Left cardiac atrium (tissue), 4 donors: ENCODE measurements at regions of chr17 and their contacts with region 1.

Region 1: DNA sequence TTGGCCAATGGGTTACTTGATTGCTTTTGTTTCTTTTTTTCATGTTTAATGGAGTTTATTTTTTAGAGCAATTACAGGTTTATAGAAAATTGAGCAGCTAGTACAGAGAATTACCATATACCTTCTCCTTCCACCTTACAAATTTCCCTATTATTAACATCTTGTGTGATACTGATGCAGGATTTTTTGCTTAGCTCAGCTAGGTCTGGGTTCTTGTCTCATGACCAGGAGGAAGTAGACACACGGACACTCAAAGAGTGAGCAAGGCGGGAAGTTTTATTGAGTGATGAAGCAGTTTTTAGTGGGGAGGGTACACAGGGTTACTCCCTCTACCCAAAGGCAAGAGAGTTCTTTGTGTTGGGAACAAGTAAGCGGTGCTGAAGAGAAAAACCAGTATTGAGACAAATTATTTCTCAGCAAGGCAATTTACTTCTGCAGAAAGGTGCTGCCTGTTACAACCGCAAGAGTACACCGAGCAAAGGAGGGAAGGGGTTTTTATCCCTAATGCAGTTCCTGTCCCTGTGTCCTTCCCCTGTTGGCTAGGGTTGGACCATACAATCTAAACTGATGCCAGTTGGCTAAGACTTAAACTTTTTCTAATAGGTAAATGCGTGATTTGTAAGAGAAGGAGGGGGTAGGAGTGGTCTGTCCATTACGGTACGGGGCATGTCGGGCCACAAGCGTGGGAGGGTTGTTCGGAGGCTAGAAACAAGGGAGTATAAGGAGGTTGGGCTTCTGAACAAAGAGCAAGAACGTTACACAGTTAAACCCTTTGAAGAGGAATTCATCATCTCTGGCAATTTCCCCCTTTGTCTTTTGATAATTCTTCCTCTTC is 26.9 kb downstream of the SEC14L1 start:
- DNase-seq: no peak
- ATAC-seq: no peak

Region 2: DNA sequence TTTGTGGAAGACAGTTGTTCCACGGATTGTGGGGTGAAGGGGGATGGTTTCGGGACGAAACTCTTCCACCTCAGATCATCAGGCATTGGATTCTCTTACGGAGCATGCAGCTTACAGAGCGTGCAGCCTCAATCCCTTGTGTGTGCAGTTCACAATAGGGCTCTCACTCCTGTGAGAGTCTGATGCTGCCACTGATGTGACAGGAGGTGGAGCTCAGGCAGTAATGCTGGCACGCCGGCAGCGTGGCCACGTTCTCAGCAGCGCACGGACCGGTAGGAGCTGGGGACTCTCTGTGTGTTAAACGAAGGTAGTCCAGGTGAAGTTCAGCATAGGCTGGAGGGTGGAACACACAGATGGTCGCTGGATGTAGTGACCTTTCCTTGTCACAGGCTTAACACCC is 10.9 kb after region 1 on chr17:
- intact Hi-C with region 1: loop called in 1 of 2 experiments (anchors 1 kb)
- DNase-seq: no peak
- ATAC-seq: peak; percentile 20 to 42

Region 3: GRCh38 chr17:77391668-77392375 is 224.1 kb after region 1 on chr17:
- intact Hi-C with region 1: no loop called
- DNase-seq: peak; percentile 83
- ATAC-seq: peak; percentile 30 to 62